Colonic mucosa (tissue), 4 donors: ENCODE measurements at regions of chr15 and their contacts with region 1.

Region 1: GRCh38 chr15:24676431-24676830 is 856 bp downstream of the NPAP1 start:
- DNase-seq: no peak
- H3K4me3 ChIP-seq: no peak overlapping the region
- H3K27ac ChIP-seq: no peak overlapping the region
- H3K4me1 ChIP-seq: no peaks in the 10 kb centered on the region
- H3K27me3 ChIP-seq: no peaks in the 10 kb centered on the region
- CTCF ChIP-seq: no peak

Region 2: DNA sequence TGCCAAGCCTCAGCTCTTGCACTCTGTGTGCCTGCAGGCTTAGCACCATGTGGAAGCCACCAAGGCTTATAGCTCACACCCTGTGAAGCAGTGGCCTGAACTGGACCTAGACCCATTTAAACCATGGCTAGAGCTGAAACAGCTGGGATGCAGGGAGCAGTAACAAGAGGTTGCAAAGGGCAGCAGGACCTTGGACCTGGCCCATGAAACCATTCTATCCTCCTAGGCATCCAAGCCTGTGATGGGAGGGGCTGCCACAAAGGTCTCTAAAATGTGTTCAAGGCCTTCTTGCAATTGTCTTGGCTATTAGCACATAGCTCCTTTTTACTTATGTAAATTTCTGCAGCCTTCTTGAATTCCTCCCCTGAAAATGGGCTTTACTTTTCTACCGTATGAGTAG is 58.8 kb before region 1 on chr15:
- intact Hi-C with region 1: no loop called
- DNase-seq: no peak
- H3K4me3 ChIP-seq: no peak overlapping the region
- H3K27ac ChIP-seq: no peak overlapping the region
- H3K4me1 ChIP-seq: no peaks in the 10 kb centered on the region
- H3K27me3 ChIP-seq: no peaks in the 10 kb centered on the region
- CTCF ChIP-seq: no peak

Region 3: DNA sequence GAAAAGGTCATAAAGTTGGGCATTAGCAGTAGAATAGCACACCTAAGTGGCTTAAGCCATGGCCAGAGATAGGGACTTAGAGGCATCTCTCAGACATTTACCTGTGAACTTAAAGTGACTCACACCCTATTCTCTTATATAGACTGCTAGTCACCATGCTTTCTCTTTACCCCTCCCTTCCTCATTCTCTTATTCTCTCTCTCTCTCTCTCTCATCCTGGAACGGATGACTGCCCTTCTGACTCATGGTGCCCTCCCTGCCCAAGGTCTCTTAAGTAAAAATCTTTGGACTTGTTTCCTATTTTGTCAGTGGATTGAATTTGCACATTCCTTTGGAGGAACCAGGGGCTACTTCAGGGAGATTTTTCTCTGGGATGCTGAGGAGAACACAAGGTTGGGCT is 58.0 kb after region 1 on chr15:
- intact Hi-C with region 1: loop called (anchors 10 kb)
- DNase-seq: no peak
- H3K4me3 ChIP-seq: no peak overlapping the region
- H3K27ac ChIP-seq: no peak overlapping the region
- H3K4me1 ChIP-seq: no peaks in the 10 kb centered on the region
- H3K27me3 ChIP-seq: no peaks in the 10 kb centered on the region
- CTCF ChIP-seq: no peak